PC-3 (cell line): ENCODE measurements at regions of chr2 and their contacts with region 1.

Region 1: DNA sequence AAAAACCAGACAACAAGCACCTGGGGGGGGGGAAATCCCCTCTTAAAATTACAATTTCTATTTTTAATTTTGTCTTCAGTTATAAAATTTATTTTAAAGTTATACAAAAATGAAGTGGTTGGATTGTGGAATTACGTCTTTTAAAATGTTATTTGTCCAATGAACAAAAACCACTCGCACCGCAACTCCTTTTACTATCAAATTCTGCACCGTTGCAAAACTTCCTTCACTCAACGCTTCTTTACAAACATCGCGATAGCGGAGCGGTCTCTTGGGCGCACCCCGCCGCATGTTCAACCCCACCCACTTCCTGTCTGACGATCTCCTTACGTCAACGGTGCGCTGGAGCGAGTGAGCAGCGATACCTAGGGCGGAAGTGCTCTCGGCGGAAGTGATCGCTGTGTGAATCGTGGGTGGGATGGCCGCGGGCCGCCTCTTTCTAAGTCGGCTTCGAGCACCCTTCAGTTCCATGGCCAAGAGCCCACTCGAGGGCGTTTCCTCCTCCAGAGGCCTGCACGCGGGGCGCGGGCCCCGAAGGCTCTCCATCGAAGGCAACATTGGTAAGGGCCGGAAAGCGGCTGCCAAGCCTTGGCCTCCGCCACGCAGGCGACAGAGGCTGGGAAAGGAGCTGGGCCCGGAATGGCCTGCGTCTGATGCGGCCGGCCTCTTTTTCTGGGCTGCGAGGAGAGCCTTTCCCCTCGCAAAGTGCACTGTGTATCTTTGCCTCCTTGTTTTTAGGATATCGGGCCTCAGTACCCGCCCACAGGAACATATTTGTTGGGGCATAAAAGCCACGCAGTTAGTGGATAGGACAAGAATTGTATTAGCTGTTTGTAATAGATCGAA is at the start of gene DGUOK:
- DNase-seq: peak; percentile 99
- ATAC-seq: peak; percentile 99
- H3K4me3 ChIP-seq: peak within 1 kb of the TSS; percentile 75
- H3K27ac ChIP-seq: peak within 1 kb of the TSS; percentile 78
- H3K4me1 ChIP-seq: peaks cover 40% of the 10 kb centered on the region
- H3K27me3 ChIP-seq: no peaks in the 10 kb centered on the region
- CTCF ChIP-seq: no peak
- total RNA-seq, gene DGUOK: 42.2 and 61.3 TPM in 2 replicates

Region 2: DNA sequence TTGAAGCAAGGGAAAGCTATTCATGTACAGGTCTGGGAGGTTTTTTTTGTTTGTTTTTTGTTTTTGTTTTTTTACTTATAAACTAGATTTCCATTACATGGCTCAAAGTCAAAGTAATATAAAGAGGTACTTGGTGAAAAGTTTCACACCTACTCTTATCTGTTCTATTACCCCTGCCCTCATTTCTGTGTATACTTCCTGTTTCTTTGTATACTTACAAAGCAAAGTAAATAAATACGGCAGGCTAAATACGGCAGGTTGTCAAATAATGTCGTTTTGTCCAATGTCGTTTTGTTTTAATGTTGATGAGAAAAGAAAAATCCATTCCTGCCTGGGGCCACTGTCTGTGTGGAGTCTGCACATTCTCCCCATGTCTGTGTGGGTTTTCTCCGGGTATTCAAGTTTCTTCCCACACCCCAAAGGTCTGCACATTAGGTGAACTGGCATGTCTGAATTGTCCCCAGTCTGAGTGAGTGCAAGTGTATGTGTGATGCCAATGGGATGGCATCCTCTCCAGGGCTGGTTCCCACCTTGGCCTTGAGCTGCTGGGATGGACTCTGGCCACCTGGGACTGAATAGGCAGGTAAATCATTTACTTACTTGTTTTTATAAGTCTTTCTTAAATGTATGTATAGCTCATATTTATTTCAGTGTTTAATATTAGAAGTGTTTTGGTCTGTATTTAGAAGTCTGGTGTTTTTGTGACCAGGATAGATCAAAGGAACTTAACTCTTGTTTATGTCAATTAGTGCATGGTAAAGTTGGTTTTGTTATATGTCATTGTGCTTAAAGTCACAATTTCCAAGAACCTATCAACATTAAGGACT is 84.6 kb before region 1 on chr2:
- CTCF ChIA-PET with region 1: interaction called, 23 read pairs
- POLR2A ChIA-PET with region 1: no interaction called
- intact Hi-C with region 1: no loop called
- DNase-seq: no peak
- ATAC-seq: 0 out of 2 replicates have a peak, but pooled peaks have one; percentile 7
- H3K4me3 ChIP-seq: no peak overlapping the region
- H3K27ac ChIP-seq: no peak overlapping the region
- H3K4me1 ChIP-seq: peaks cover 16% of the 10 kb centered on the region
- H3K27me3 ChIP-seq: no peaks in the 10 kb centered on the region
- CTCF ChIP-seq: no peak